ENCODE measurements at regions of chr3 and their contacts with region 1.

Region 1: DNA sequence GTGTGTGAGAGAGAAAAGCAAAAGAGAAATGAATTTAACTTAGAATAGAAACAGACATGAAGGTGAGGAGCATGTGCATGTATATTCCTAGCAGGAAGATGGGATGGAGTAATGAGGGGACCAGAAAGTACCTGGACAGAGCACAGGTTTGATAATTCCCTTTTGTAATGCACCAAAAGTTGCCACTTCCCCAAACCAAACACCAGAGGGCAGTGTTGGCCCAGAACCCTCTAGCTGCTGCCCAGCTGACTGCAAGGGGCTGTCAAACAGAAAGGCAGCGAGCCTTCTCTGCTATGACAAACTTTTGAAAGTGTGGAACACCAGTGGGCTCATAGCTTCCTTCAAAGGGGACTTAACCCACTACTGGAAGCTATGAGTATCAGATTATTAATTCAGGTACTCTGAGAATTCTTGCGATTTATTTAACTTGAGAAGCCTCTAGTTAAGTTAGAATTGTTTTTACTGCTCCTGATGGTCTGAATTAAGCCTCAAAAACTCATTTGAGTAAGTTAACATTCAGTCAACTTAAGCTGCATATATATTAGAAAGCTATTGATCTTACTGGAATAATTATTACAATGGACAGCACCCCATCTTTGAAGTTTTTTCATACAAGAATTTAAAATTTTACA is 234.9 kb downstream of the NEK10 start:
- DNase-seq: peak; percentile 66
- ATAC-seq: peak; percentile 96
- H3K4me3 ChIP-seq: no peak overlapping the region
- H3K27ac ChIP-seq: no peak overlapping the region
- H3K4me1 ChIP-seq: peaks cover 44% of the 10 kb centered on the region
- H3K27me3 ChIP-seq: no peaks in the 10 kb centered on the region
- CTCF ChIP-seq: peak; percentile 92
- EP300 ChIP-seq: no peak
- POLR2A ChIP-seq: no peak
- RAD21 ChIP-seq: peak; percentile 88

Region 2: DNA sequence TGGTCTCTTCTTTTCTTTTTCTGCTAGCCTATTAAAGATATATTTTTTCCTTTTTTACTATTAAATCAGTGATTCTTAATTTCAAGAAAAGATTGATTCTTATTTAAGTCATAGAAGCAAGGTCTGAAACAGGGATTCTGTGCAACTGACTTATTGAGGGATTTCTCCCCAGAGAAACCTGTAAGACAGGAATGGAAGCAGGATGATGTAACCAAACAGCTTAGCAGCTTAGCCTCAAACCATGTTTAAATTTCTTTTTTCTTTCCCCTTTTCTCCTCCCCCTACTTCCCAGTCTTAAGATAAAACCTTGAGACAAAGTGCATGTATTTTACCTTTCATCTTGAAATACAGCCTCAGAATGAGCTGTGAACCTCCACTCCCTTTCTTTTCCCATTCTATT is 87.9 kb before region 1 on chr3:
- CTCF ChIA-PET with region 1: no interaction called
- POLR2A ChIA-PET with region 1: no interaction called
- in situ Hi-C with region 1: no loop called
- intact Hi-C with region 1: no loop called
- DNase-seq: no peak
- ATAC-seq: no peak
- H3K4me3 ChIP-seq: no peak overlapping the region
- H3K27ac ChIP-seq: no peak overlapping the region
- H3K4me1 ChIP-seq: no peaks in the 10 kb centered on the region
- H3K27me3 ChIP-seq: no peaks in the 10 kb centered on the region
- CTCF ChIP-seq: no peak
- EP300 ChIP-seq: no peak
- POLR2A ChIP-seq: no peak
- RAD21 ChIP-seq: no peak

Region 3: GRCh38 chr3:27105904-27106303 is 28.4 kb before region 1 on chr3:
- CTCF ChIA-PET with region 1: no interaction called
- POLR2A ChIA-PET with region 1: no interaction called
- in situ Hi-C with region 1: no loop called
- intact Hi-C with region 1: loop called (anchors 1 kb)
- DNase-seq: no peak
- ATAC-seq: peak; percentile 60
- H3K4me3 ChIP-seq: no peak overlapping the region
- H3K27ac ChIP-seq: no peak overlapping the region
- H3K4me1 ChIP-seq: no peaks in the 10 kb centered on the region
- H3K27me3 ChIP-seq: no peaks in the 10 kb centered on the region
- CTCF ChIP-seq: no peak; the same call in 1 of the 2 replicates
- EP300 ChIP-seq: no peak
- POLR2A ChIP-seq: no peak
- RAD21 ChIP-seq: no peak

Region 4: GRCh38 chr3:27253831-27254230 is 119.5 kb after region 1 on chr3:
- CTCF ChIA-PET with region 1: interaction called, 10 read pairs
- POLR2A ChIA-PET with region 1: no interaction called
- in situ Hi-C with region 1: no loop called
- intact Hi-C with region 1: loop called (anchors 1 kb)
- DNase-seq: peak; percentile 25
- ATAC-seq: peak; percentile 96
- H3K4me3 ChIP-seq: no peak overlapping the region
- H3K27ac ChIP-seq: no peak overlapping the region
- H3K4me1 ChIP-seq: no peaks in the 10 kb centered on the region
- H3K27me3 ChIP-seq: no peaks in the 10 kb centered on the region
- CTCF ChIP-seq: peak; percentile 74
- EP300 ChIP-seq: no peak
- POLR2A ChIP-seq: no peak
- RAD21 ChIP-seq: peak; percentile 56

Region 5: DNA sequence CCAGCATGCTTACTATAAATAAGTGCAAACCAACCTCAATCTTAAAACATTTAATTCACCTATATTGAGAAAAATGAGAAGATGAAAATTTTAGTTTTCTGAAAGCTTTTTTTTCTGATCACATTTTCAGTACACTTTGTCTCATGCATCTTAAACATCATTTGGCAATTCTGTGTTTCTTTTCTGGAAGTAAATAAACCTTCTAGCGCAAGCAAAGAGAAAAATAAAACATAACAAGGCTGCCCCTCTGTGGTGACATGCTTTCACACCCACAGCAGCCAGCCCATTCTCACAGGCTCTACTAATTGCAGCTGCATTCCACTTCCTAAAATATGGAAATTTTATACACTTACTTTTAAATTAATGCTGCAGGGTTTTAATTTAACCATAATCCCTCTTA is 144.8 kb after region 1 on chr3:
- CTCF ChIA-PET with region 1: interaction called, 14 read pairs
- POLR2A ChIA-PET with region 1: interaction called, 3 read pairs
- in situ Hi-C with region 1: loop called (anchors 10 kb)
- intact Hi-C with region 1: loop called (anchors 1 kb)
- DNase-seq: no peak
- ATAC-seq: no peak
- H3K4me3 ChIP-seq: no peak overlapping the region
- H3K27ac ChIP-seq: no peak overlapping the region
- H3K4me1 ChIP-seq: peaks cover 53% of the 10 kb centered on the region
- H3K27me3 ChIP-seq: no peaks in the 10 kb centered on the region
- CTCF ChIP-seq: peak; percentile 66
- EP300 ChIP-seq: no peak
- POLR2A ChIP-seq: no peak
- RAD21 ChIP-seq: peak; percentile 23; the same call in 1 of the 2 replicates

Region 6: DNA sequence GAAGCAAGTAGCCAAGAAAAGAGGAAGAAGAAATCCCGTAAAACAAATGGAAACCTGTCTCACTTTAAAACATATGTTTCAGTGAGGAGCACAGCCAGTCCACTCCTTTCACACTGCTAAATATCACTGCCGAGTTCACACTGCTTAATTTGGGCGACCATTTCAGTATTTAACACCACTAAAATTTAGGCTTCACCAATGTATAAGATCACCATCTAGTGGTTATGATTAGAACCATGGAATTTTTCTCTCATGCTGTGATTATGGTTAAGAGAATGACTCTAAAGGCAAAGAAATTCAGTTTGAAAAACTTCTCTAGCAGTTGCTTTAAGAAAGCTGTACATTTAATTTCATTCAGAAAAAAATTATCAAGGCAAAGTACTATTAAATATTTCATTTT is 333.3 kb after region 1 on chr3:
- CTCF ChIA-PET with region 1: interaction called, 4 read pairs
- POLR2A ChIA-PET with region 1: no interaction called
- in situ Hi-C with region 1: loop called (anchors 25 kb)
- intact Hi-C with region 1: loop called (anchors 1 kb)
- DNase-seq: peak; percentile 28
- ATAC-seq: peak; percentile 63
- H3K4me3 ChIP-seq: no peak overlapping the region
- H3K27ac ChIP-seq: no peak overlapping the region
- H3K4me1 ChIP-seq: no peaks in the 10 kb centered on the region
- H3K27me3 ChIP-seq: no peaks in the 10 kb centered on the region
- CTCF ChIP-seq: peak; percentile 60
- EP300 ChIP-seq: no peak
- POLR2A ChIP-seq: no peak
- RAD21 ChIP-seq: 0 out of 2 replicates have a peak, but pooled peaks have one; percentile 30

Region 7: GRCh38 chr3:27659279-27660021 is 525.2 kb after region 1 on chr3:
- CTCF ChIA-PET with region 1: no interaction called
- POLR2A ChIA-PET with region 1: no interaction called
- in situ Hi-C with region 1: loop called (anchors 25 kb)
- intact Hi-C with region 1: loop called (anchors 10 kb)
- DNase-seq: peak; percentile 48
- ATAC-seq: peak; percentile 98
- H3K4me3 ChIP-seq: peak overlapping the region in 1 of 3 experiments; percentile 20; a peak in 2 of 6 replicates
- H3K27ac ChIP-seq: no peak overlapping the region
- H3K4me1 ChIP-seq: no peaks in the 10 kb centered on the region
- H3K27me3 ChIP-seq: no peaks in the 10 kb centered on the region
- CTCF ChIP-seq: peak; percentile 88
- EP300 ChIP-seq: no peak
- POLR2A ChIP-seq: no peak
- RAD21 ChIP-seq: peak; percentile 46; the same call in 1 of the 2 replicates

Region 8: DNA sequence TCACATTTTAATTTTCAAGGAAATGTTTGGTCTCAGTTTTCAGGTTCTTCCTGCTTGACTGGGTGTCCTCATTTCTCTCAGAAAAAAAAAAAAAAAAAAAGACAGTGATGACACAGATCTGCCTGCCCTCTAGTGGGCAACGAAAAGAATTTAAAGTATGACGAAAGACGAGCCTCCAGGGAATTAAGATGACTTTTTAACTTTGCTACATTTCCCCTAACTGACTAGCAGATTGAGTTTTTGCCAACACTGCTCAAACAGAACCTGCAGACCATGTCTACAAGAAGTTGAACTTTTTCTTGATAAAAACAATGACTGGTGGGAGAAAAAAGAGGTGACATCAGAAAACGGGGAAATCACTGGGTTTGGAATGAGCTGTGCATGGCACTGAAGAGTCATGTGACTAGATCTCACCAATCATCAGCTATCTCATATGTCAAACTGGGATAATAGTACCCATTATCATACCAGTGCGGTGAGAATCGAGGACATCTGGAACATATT is 547.0 kb after region 1 on chr3:
- CTCF ChIA-PET with region 1: no interaction called
- POLR2A ChIA-PET with region 1: no interaction called
- in situ Hi-C with region 1: no loop called
- intact Hi-C with region 1: loop called (anchors 2 kb)
- DNase-seq: peak; percentile 74
- ATAC-seq: peak; percentile 69
- H3K4me3 ChIP-seq: peak overlapping the region; percentile 48 to 62 (median 51); a peak in 4 of 6 replicates
- H3K27ac ChIP-seq: peak overlapping the region; percentile 60
- H3K4me1 ChIP-seq: peaks cover 37% of the 10 kb centered on the region
- H3K27me3 ChIP-seq: no peaks in the 10 kb centered on the region
- CTCF ChIP-seq: peak; percentile 69
- EP300 ChIP-seq: no peak
- POLR2A ChIP-seq: no peak
- RAD21 ChIP-seq: peak; percentile 31; the same call in 1 of the 2 replicates